ENCODE measurements at regions of chr6 and their contacts with region 1.

Region 1: GRCh38 chr6:70221025-70221714 is 81.7 kb downstream of the COL9A1 start:
- DNase-seq: no peak
- ATAC-seq: peak in 2 of 4 donors; percentile 50 to 55
- H3K4me3 ChIP-seq: no peak overlapping the region
- H3K27ac ChIP-seq: no peak overlapping the region
- H3K4me1 ChIP-seq: no peaks in the 10 kb centered on the region
- H3K27me3 ChIP-seq: peaks cover 0 to 11% (median 0%) of the 10 kb centered on the region in 9 donors
- CTCF ChIP-seq: peak; percentile 60 to 85 (median 77)
- POLR2A ChIP-seq: no peak

Region 2: DNA sequence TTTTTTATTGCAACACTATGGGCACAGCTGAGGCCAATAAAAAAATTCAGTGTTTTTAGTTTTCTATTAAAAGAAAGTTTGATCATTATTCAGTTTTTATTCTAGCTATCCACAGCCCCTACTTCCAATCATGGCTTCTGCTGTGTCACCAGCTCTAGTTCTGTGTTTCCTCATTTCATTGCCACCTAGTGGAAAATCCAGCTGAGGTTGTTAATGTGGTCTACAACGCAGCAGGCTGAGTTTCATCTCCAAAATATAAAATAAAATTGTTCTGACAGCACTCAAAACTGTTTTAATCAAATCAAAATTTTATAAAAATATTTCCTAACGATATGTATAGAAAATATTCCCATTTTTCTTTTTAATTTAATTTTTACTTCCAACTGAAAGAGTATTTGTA is 68.1 kb after region 1 on chr6:
- intact Hi-C with region 1: loop called in 8 of 10 experiments (anchors 5 to 10 kb)
- DNase-seq: no peak
- ATAC-seq: peak in 1 of 4 donors; percentile 48
- H3K4me3 ChIP-seq: no peak overlapping the region
- H3K27ac ChIP-seq: no peak overlapping the region
- H3K4me1 ChIP-seq: no peaks in the 10 kb centered on the region
- H3K27me3 ChIP-seq: peaks cover 0 to 13% (median 0%) of the 10 kb centered on the region in 9 donors
- CTCF ChIP-seq: peak in 5 of 12 donors; percentile 14 to 45 (median 33)
- POLR2A ChIP-seq: no peak

Region 3: DNA sequence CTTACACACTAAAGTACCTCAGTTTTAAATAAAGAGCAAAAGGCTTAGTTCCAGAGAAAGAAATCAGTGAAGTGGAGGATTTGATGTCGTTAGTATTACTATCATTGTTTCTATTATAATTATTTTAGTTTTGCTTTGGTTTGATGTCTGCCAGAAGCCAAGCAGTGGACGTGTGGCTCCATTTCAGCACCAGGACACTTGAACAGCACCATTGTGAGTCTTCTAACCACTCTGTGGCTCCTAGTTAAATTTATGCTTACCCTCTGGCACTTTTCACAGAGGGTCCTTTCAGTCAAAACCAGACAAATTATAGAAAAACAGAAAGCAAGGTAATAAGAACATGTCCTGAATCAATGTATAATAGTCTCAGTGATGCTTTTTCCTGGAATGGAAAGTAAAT is 78.3 kb after region 1 on chr6:
- intact Hi-C with region 1: loop called in 3 of 10 experiments (anchors 5 to 10 kb)
- DNase-seq: no peak
- ATAC-seq: no peak
- H3K4me3 ChIP-seq: no peak overlapping the region
- H3K27ac ChIP-seq: no peak overlapping the region
- H3K4me1 ChIP-seq: peaks cover 0 to 9% (median 0%) of the 10 kb centered on the region in 12 donors
- H3K27me3 ChIP-seq: peaks cover 0 to 11% (median 0%) of the 10 kb centered on the region in 9 donors
- CTCF ChIP-seq: no peak
- POLR2A ChIP-seq: no peak

Region 4: GRCh38 chr6:70304616-70305015 is 83.4 kb after region 1 on chr6:
- intact Hi-C with region 1: loop called in 2 of 10 experiments (anchors 5 to 10 kb)
- DNase-seq: no peak
- ATAC-seq: peak in 1 of 4 donors; percentile 32
- H3K4me3 ChIP-seq: no peak overlapping the region
- H3K27ac ChIP-seq: no peak overlapping the region
- H3K4me1 ChIP-seq: no peaks in the 10 kb centered on the region
- H3K27me3 ChIP-seq: peaks cover 0 to 11% (median 0%) of the 10 kb centered on the region in 9 donors
- CTCF ChIP-seq: no peak
- POLR2A ChIP-seq: no peak

Region 5: DNA sequence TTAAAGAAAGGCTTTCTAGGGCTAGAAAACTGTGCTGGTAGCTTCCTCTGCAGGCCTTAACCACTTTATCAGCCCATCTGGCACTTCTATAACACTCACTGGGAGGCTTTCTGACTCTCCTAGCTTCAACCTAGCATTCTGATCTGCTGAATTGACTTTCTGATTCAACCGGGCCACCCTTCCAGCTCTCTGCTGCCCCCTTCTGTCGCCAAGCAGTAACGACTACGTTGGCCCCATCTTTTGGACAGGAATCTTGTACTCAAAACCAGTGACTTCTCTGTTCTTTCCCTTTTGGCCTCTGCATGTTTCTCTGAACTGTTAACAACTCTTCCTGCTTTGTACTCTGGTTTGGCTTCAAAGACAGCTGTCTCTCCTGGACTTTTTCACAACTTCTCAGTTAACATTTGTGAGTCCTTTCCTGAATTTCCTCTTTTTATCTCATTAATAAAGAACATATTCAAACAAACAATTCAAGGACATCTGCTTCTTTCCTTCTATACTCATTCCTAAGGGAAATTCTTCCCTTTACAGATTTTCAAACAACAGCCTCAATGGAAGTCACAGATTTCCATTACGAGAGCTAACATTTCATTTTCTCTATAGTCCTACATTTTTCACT is 148.3 kb after region 1 on chr6:
- intact Hi-C with region 1: loop called (anchors 1 to 10 kb)
- DNase-seq: peak in 4 of 5 donors; percentile 33 to 69 (median 52)
- ATAC-seq: peak; percentile 20 to 76 (median 66)
- H3K4me3 ChIP-seq: no peak overlapping the region
- H3K27ac ChIP-seq: no peak overlapping the region
- H3K4me1 ChIP-seq: no peaks in the 10 kb centered on the region
- H3K27me3 ChIP-seq: no peaks in the 10 kb centered on the region
- CTCF ChIP-seq: peak; percentile 78 to 97 (median 90)
- POLR2A ChIP-seq: no peak

Region 6: DNA sequence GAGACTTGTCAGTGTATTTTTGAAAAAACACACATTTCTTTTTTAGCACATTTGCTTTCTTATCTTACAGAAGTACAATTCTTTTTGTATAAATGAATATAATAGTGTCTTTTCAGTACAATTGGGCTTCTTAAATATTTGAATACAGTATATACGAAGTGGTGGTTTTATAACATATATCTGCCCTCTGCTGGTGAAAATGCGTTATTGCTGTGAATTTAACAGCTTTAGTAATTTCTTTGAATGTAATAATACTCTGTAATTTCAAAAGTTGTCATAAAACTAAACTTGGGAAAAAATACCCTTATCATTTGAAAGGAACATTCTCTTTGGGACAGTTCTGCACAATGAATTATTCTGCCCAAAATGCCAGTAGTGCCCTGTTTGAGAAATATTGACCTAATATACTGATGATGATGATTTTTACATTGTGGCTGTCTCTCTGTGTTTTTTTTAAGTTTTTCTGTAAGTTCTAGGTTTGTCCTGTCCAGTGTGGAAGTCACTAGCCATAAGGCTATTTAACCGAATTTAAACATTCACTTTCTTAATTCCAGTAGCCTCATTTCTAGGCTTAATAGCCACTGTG is 465.5 kb after region 1 on chr6:
- intact Hi-C with region 1: loop called in 1 of 10 experiments (anchors 10 kb)
- DNase-seq: no peak
- ATAC-seq: peak in 1 of 4 donors; percentile 67
- H3K4me3 ChIP-seq: no peak overlapping the region
- H3K27ac ChIP-seq: no peak overlapping the region
- H3K4me1 ChIP-seq: peaks cover 0 to 36% (median 22%) of the 10 kb centered on the region in 12 donors
- H3K27me3 ChIP-seq: no peaks in the 10 kb centered on the region
- CTCF ChIP-seq: peak; percentile 66 to 87 (median 83)
- POLR2A ChIP-seq: no peak

Region 7: DNA sequence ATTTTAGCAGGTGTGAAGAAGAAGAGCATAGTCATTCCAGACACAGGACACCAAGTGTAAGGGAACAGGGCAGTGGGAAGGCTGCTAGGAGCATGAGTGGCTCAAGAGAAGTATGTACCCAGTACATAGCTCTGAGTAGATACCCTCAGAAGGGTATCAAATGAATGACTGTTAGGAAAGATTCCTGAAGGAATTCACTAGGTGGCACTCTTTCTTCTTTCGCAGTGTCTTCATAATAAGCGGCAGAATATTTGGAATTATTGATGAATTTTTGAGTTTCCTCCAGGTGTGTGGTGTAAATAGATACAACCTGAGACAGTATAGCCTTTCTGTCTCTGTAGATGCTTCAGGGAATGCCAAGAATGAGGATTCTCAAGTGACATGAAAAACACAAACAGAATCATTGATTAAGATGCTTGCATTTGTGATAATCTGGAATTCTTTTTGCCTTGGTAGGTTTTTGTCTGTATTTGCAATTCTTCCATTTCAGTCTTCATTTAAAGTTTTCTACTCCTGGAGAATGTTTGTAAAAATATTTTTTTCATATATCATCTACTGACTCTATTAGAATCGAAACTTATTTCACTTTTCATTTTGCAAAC is 1400.8 kb after region 1 on chr6:
- intact Hi-C with region 1: no loop called
- DNase-seq: no peak
- ATAC-seq: no peak
- H3K4me3 ChIP-seq: no peak overlapping the region
- H3K27ac ChIP-seq: no peak overlapping the region
- H3K4me1 ChIP-seq: no peaks in the 10 kb centered on the region
- H3K27me3 ChIP-seq: no peaks in the 10 kb centered on the region
- CTCF ChIP-seq: peak in 9 of 12 donors; percentile 12 to 52 (median 28)
- POLR2A ChIP-seq: no peak